HepG2 (cell line): ENCODE measurements at regions of chr17 and their contacts with region 1.

Region 1: GRCh38 chr17:2386400-2387085 is 14.3 kb downstream of the MNT start:
- DNase-seq: no peak
- ATAC-seq: no peak
- H3K4me3 ChIP-seq: no peak overlapping the region
- H3K27ac ChIP-seq: no peak overlapping the region
- H3K4me1 ChIP-seq: peaks cover 33% of the 10 kb centered on the region
- H3K27me3 ChIP-seq: no peaks in the 10 kb centered on the region
- CTCF ChIP-seq: no peak
- EP300 ChIP-seq: no peak
- POLR2A ChIP-seq: no peak
- RAD21 ChIP-seq: no peak

Region 2: GRCh38 chr17:2401426-2402221 is 15.1 kb after region 1 on chr17:
- CTCF ChIA-PET with region 1: no interaction called
- POLR2A ChIA-PET with region 1: interaction called, 19 read pairs
- in situ Hi-C with region 1: no loop called
- intact Hi-C with region 1: loop called (anchors 2 kb)
- DNase-seq: peak; percentile 96
- ATAC-seq: peak; percentile 57
- H3K4me3 ChIP-seq: peak overlapping the region; percentile 76 to 96 (median 87)
- H3K27ac ChIP-seq: peak overlapping the region; percentile 100
- H3K4me1 ChIP-seq: peaks cover 44% of the 10 kb centered on the region
- H3K27me3 ChIP-seq: no peaks in the 10 kb centered on the region; a peak in 2 of 5 replicates
- CTCF ChIP-seq: no peak
- EP300 ChIP-seq: no peak
- POLR2A ChIP-seq: peak in 1 of 2 experiments; percentile 64; a peak in 2 of 4 replicates
- RAD21 ChIP-seq: peak; percentile 30; the same call in 1 of the 2 replicates

Region 3: DNA sequence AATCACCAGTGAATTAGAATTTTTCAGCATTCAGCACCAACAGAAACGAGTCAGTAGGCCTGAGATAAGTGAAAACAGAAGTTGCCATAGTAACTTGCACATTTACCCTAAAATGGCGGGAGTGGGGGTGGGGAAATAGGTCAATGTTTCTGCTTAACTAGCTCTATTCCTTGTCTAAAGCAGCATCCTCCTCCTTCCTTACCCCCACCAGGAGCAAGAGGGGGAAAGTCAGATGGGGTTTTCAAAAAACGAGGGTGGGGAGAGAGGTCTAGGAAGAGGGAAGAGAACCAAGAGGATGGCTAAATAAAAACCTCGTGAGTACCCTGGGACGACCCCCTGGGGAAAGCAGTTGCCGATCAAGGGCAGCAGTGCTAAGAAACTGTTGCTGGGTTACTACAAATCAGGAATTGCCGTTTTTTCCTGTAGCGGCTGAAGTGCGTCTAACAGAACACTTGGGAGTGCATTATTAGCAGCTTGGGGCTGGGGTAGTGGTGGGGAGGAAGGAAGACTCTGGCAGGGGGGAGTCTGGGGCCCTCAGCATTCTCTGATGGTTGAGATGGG is 48.7 kb after region 1 on chr17:
- CTCF ChIA-PET with region 1: no interaction called
- POLR2A ChIA-PET with region 1: no interaction called
- in situ Hi-C with region 1: no loop called
- intact Hi-C with region 1: no loop called
- DNase-seq: no peak
- ATAC-seq: no peak
- H3K4me3 ChIP-seq: no peak overlapping the region
- H3K27ac ChIP-seq: no peak overlapping the region
- H3K4me1 ChIP-seq: no peaks in the 10 kb centered on the region
- H3K27me3 ChIP-seq: no peaks in the 10 kb centered on the region
- CTCF ChIP-seq: no peak
- EP300 ChIP-seq: no peak
- POLR2A ChIP-seq: no peak
- RAD21 ChIP-seq: no peak